ENCODE measurements at regions of chr12 and their contacts with region 1.

Region 1: DNA sequence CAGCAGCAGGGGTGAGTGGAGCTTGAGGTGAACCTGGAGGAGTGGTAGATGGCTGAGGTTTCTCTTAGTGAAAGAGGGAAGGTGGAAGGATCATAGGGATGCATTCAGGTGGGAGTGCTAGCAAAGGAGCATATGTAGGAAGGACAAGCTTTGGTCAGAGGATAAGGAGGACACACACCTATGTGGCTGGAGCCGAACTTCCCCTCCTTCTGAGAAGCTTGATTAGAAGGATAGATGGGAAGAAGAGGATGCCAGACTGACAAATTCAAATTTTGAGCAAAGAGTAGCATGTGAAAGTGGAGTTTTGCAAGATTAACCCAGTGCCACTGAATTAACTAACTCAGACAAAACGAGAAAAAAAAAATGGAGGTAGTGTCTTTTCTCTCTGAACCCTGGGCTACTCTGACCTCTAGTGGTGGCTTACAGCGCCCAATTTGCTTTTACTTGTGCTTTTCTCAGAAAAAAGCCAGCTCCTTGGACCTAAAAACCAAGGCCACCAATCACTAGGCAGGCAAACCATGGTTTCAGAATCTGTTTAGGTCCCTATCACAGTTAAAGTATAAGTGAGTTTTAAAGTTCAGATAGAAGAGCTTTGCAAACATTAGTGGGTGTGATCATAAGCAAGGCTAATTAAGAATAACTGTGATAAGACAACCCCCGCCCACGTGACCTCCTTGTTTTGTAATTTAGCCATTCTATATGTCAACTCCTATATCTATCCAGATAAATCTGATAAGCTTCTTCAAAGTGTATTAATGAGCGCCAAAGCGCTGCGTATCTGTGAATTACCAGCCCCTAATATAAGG is 15.5 kb downstream of the EMP1 start:
- DNase-seq: peak; percentile 52
- H3K4me3 ChIP-seq: no peak overlapping the region
- H3K27ac ChIP-seq: peak overlapping the region; percentile 18
- H3K27me3 ChIP-seq: no peaks in the 10 kb centered on the region
- CTCF ChIP-seq: peak; percentile 83

Region 2: GRCh38 chr12:12837025-12837872 is 374.8 kb before region 1 on chr12:
- in situ Hi-C with region 1: loop called (anchors 25 kb)
- DNase-seq: peak; percentile 79
- H3K4me3 ChIP-seq: no peak overlapping the region
- H3K27ac ChIP-seq: peak overlapping the region; percentile 44
- H3K27me3 ChIP-seq: no peaks in the 10 kb centered on the region
- CTCF ChIP-seq: peak; percentile 60

Region 3: GRCh38 chr12:12999959-13000615 is 212.0 kb before region 1 on chr12 and contains the start of gene HEBP1:
- in situ Hi-C with region 1: loop called (anchors 25 kb)
- DNase-seq: peak; percentile 86
- H3K4me3 ChIP-seq: peak within 1 kb of the TSS; percentile 88
- H3K27ac ChIP-seq: peak within 1 kb of the TSS; percentile 49
- H3K27me3 ChIP-seq: no peaks in the 10 kb centered on the region
- CTCF ChIP-seq: no peak